Activated CD4-positive, alpha-beta T cell treated with anti-CD3 and anti-CD28 coated beads for 36 hours (primary cell): ENCODE measurements at regions of chr4 and their contacts with region 1.

Region 1: DNA sequence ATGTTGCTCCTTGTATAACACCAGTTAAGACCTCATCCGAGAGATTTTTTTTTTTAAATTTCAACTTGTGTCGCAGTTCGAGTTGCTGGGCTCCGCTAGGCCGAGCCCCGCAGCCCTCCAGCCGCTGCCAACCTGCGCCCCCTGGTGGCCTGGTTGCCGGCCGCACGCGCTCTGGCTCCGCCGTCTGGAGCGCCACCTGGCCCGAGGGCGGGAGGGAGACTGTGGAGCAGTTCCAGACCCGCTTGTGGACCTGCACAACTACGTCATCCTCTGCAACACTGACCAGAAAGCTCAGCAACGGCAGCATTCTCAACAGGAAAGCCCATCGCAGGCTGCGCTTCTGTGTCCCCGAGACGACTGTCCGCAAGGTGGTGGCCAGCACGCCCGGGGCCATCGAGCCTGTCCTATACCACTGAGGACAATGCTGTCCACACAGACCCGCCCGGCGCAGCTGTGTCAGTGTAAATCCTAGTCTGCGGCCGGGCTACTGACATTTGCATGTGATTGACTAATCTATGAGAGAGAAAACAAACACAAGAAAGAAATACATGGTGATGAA is 39.1 kb downstream of the ARL9 start:
- DNase-seq: peak; percentile 92
- ATAC-seq: peak; percentile 100
- H3K4me3 Mint-ChIP-seq: peak overlapping the region; percentile 54
- H3K27ac Mint-ChIP-seq: no peak overlapping the region
- H3K4me1 Mint-ChIP-seq: peaks cover 16% of the 10 kb centered on the region
- H3K27me3 Mint-ChIP-seq: peaks cover 3% of the 10 kb centered on the region

Region 2: DNA sequence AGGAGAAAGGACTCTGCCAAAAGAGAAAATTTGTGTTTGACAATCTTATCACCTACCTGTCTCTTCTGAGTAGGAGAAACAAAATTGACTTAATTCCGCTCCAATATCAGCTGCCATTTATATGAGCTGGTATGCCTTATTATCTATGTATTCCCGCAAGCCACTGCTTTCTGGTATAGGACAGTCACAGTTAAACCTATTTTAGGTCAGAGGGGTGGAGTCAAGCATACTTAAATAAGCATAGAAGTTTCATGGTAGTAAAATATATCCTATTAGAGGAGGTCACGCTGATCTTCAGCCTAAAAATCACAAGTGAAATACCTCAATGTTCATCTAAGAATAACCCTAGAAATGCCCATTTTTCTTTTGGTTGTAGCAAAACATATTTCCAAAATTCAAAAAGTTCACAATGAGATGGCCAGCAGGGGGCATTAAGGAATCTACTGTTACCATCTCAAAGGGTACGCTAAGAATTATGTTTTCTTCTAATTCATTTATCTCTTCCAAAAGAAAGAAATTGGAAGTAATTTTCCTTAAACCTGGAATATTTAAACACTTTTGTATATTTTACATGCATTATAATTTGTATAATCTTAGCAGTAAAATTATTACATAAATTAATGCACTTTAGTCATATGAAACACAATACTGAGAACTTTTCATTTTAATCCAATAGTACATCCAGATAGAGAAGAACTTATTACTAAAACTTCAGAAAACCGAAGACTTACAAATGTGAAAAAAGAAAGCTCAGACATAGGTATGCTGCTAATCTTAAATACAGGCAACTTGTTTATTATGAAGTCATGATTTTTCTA is 119.7 kb before region 1 on chr4:
- CTCF ChIA-PET with region 1: interaction called, 4 read pairs
- POLR2A ChIA-PET with region 1: no interaction called
- intact Hi-C with region 1: loop called (anchors 1 kb)
- DNase-seq: peak; percentile 39
- ATAC-seq: no peak
- H3K4me3 Mint-ChIP-seq: no peak overlapping the region
- H3K27ac Mint-ChIP-seq: no peak overlapping the region
- H3K4me1 Mint-ChIP-seq: peaks cover 24% of the 10 kb centered on the region
- H3K27me3 Mint-ChIP-seq: no peaks in the 10 kb centered on the region

Region 3: GRCh38 chr4:56505269-56506130 is 39.2 kb before region 1 on chr4 and contains the start of gene ARL9:
- CTCF ChIA-PET with region 1: no interaction called
- POLR2A ChIA-PET with region 1: no interaction called
- intact Hi-C with region 1: loop called in 1 of 2 experiments (anchors 2 kb)
- DNase-seq: peak; percentile 75
- ATAC-seq: peak; percentile 91
- H3K4me3 Mint-ChIP-seq: peak within 1 kb of the TSS; percentile 78
- H3K27ac Mint-ChIP-seq: peak within 1 kb of the TSS; percentile 74
- H3K4me1 Mint-ChIP-seq: peaks cover 22% of the 10 kb centered on the region
- H3K27me3 Mint-ChIP-seq: no peaks in the 10 kb centered on the region
- total RNA-seq, gene ARL9: 0.25 to 0.37 TPM

Region 4: GRCh38 chr4:56530269-56531148 is 14.1 kb before region 1 on chr4:
- CTCF ChIA-PET with region 1: interaction called, 12 read pairs
- POLR2A ChIA-PET with region 1: no interaction called
- intact Hi-C with region 1: loop called in 1 of 2 experiments (anchors 1 kb)
- DNase-seq: peak; percentile 92
- ATAC-seq: peak; percentile 99
- H3K4me3 Mint-ChIP-seq: no peak overlapping the region
- H3K27ac Mint-ChIP-seq: peak overlapping the region; percentile 11
- H3K4me1 Mint-ChIP-seq: peaks cover 3% of the 10 kb centered on the region
- H3K27me3 Mint-ChIP-seq: peaks cover 3% of the 10 kb centered on the region

Region 5: DNA sequence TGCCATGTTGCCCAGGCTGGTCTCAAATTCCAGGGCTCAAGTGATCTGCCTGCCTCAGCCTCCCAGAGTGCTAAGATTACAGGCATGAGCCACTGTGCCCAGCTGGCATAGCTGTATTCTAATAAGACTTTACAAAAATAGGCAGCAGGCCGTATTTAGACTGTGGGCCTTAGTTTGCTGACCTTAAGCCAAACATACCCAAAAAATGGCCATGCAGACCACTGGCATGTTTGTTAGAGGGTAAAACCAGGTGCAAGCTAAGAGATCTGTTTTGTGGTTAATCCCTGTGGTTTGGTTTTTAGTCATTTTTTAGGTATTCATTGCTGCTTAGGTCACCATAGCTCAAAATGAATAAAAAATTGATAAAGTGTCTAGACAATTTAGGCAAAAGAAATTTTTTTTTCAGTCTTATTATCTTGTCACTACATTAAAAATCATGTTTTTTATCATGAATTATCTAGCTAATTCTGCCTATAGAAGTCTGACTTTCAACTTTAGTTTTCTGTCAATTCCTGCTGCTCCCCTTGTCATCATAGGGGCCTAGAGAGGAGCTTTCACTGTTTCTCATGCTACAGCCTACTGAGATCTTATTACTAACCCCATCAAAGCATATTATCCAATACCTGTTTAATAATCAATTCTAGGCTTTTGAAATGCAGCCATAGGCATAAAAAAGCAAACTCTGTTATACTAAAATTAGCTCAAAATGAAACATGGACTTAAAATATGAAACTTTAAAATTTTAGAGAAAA is 284.3 kb after region 1 on chr4:
- CTCF ChIA-PET with region 1: interaction called, 3 read pairs
- POLR2A ChIA-PET with region 1: no interaction called
- intact Hi-C with region 1: loop called in 1 of 2 experiments (anchors 10 kb)
- DNase-seq: no peak
- ATAC-seq: peak; percentile 24
- H3K4me3 Mint-ChIP-seq: no peak overlapping the region
- H3K27ac Mint-ChIP-seq: no peak overlapping the region
- H3K4me1 Mint-ChIP-seq: peaks cover 18% of the 10 kb centered on the region
- H3K27me3 Mint-ChIP-seq: no peaks in the 10 kb centered on the region